ENCODE measurements at regions of chr7 and their contacts with region 1.

Region 1: GRCh38 chr7:152145853-152146466 is 120.5 kb downstream of the GALNT11 start:
- DNase-seq: peak; percentile 32 to 52
- ATAC-seq: peak; percentile 92 to 93
- H3K4me3 ChIP-seq: no peak overlapping the region
- H3K27ac ChIP-seq: no peak overlapping the region
- H3K4me1 ChIP-seq: no peaks in the 10 kb centered on the region
- CTCF ChIP-seq: peak; percentile 73
- EP300 ChIP-seq: no peak
- POLR2A ChIP-seq: no peak
- RAD21 ChIP-seq: peak; percentile 57 to 58

Region 2: DNA sequence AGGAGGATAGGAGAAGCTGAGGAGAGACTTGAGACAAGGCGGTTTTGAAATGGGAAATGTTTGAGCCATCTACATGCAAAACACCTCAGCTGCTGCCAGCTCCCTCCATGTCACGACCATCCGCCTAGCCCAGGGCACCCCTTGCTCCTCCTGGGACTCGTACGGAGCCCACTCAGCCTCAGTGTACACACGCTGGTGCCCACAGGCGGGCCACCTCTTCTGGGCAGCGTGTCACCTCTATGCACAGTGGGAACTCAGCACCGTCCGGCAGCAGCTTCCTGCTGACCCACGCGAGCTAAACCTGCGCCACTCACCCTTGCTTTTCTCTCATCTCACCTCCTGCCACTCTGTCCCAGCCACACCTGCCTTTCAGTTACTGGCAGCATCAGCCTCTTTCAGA is 12.2 kb before region 1 on chr7:
- CTCF ChIA-PET with region 1: interaction called, 10 read pairs
- POLR2A ChIA-PET with region 1: no interaction called
- DNase-seq: no peak
- ATAC-seq: no peak; a peak in 1 of 6 replicates
- H3K4me3 ChIP-seq: no peak overlapping the region
- H3K27ac ChIP-seq: no peak overlapping the region
- H3K4me1 ChIP-seq: no peaks in the 10 kb centered on the region
- CTCF ChIP-seq: no peak
- EP300 ChIP-seq: no peak
- POLR2A ChIP-seq: no peak
- RAD21 ChIP-seq: no peak

Measured in A549 (cell line).